Activated CD4-positive, alpha-beta memory T cell treated with anti-CD3 and anti-CD28 coated beads, Interleukin-2, amount 10 ng/mL, durations not matched to agents 7 days and 5 days (primary cell): ENCODE measurements at regions of chr12 and their contacts with region 1.

Region 1: DNA sequence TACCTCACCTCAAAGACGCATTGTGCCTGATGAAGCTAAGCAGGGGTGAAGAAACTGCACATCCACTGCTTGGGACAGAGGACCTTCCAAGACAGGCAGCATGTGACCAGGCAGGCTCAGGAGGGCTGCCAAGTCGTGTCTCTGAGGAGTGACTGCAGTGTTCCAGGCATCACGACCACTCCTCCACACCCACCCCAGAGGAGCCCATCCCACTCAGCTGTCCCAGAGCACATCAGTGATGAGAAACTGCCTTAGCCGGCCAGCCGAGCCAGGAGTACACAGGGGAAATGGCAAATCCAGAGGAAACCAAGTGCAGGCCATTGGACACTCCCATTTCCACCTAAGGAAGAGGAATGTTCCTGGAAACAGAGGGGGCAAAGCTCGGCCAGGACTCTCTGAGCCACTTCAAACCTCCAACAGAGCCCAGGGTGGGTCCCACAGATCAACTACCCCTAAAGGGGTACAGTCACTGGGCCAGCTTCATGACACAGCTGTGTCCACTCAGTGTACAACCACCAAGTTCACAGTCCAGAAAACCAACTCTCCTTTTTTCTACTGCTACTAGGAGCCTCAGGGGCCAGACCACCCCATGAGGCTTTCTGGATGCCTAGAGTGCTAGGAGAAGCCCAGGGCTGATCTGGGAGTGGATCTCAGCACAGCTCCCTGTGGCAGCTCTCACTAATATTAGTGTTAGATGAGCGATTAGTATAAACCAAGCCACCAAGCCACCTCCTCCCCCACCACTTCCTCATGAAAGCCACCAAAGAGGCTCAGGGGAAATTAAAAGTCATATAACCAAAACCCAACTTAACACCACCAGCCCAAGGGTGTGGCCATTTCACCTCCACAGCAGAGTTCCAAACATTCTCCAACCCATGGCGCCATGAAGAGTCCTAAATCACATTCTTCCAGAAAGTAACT is 15.4 kb downstream of the PXN start:
- DNase-seq: peak; percentile 80
- H3K4me3 Mint-ChIP-seq: peak overlapping the region; percentile 57
- H3K27ac Mint-ChIP-seq: peak overlapping the region; percentile 96
- H3K4me1 Mint-ChIP-seq: peaks cover 84% of the 10 kb centered on the region
- H3K27me3 Mint-ChIP-seq: no peaks in the 10 kb centered on the region

Region 2: GRCh38 chr12:120234643-120235368 is 15.3 kb before region 1 on chr12:
- CTCF ChIA-PET with region 1: interaction called, 228 read pairs
- POLR2A ChIA-PET with region 1: interaction called, 232 read pairs
- DNase-seq: no peak
- H3K4me3 Mint-ChIP-seq: no peak overlapping the region
- H3K27ac Mint-ChIP-seq: no peak overlapping the region
- H3K4me1 Mint-ChIP-seq: peaks cover 85% of the 10 kb centered on the region
- H3K27me3 Mint-ChIP-seq: no peaks in the 10 kb centered on the region